Activated CD8-positive, alpha-beta T cell treated with anti-CD3 and anti-CD28 coated beads for 36 hours (primary cell): ENCODE measurements at regions of chr20 and their contacts with region 1.

Region 1: GRCh38 chr20:49888345-49888966 is 26.9 kb downstream of the SPATA2 start:
- DNase-seq: peak; percentile 76
- ATAC-seq: peak; percentile 68
- H3K4me3 Mint-ChIP-seq: no peak overlapping the region
- H3K27ac Mint-ChIP-seq: no peak overlapping the region
- H3K4me1 Mint-ChIP-seq: peaks cover 23% of the 10 kb centered on the region
- H3K27me3 Mint-ChIP-seq: no peaks in the 10 kb centered on the region
- CTCF ChIP-seq: peak; percentile 92

Region 2: DNA sequence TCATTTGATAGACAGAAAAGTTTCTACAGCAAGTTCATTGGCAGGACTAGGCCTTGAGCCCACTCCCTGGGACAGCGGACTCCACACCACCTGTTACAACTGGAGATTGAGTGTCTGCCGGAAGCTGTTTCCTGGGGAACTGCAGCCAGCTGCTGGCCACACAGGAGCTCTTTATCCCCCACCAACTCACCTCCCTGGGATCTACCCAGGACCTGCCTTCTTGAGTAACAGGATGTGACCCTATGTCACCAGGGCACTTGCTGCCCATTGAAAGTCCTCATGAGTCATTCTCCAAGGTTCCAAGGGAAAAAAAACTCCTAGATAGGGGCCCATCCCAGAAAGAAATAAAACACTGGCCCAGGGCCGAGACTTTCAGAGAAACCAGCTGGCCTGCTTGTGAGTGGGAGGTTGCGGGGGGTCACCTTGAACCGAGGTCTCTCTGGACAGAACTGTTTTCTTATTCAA is 113.2 kb before region 1 on chr20:
- CTCF ChIA-PET with region 1: no interaction called
- POLR2A ChIA-PET with region 1: no interaction called
- intact Hi-C with region 1: no loop called
- DNase-seq: no peak
- ATAC-seq: no peak
- H3K4me3 Mint-ChIP-seq: no peak overlapping the region
- H3K27ac Mint-ChIP-seq: no peak overlapping the region
- H3K4me1 Mint-ChIP-seq: peaks cover 20% of the 10 kb centered on the region
- H3K27me3 Mint-ChIP-seq: peaks cover 12% of the 10 kb centered on the region
- CTCF ChIP-seq: no peak

Region 3: GRCh38 chr20:49872056-49872455 is 16.4 kb before region 1 on chr20:
- CTCF ChIA-PET with region 1: interaction called, 16 read pairs
- POLR2A ChIA-PET with region 1: no interaction called
- intact Hi-C with region 1: no loop called
- DNase-seq: no peak
- ATAC-seq: no peak
- H3K4me3 Mint-ChIP-seq: no peak overlapping the region
- H3K27ac Mint-ChIP-seq: no peak overlapping the region
- H3K4me1 Mint-ChIP-seq: no peaks in the 10 kb centered on the region
- H3K27me3 Mint-ChIP-seq: no peaks in the 10 kb centered on the region
- CTCF ChIP-seq: no peak

Region 4: GRCh38 chr20:49901588-49901987 is 13.1 kb after region 1 on chr20:
- CTCF ChIA-PET with region 1: interaction called, 31 read pairs
- POLR2A ChIA-PET with region 1: interaction called, 3 read pairs
- intact Hi-C with region 1: no loop called
- DNase-seq: no peak
- ATAC-seq: no peak
- H3K4me3 Mint-ChIP-seq: no peak overlapping the region
- H3K27ac Mint-ChIP-seq: no peak overlapping the region
- H3K4me1 Mint-ChIP-seq: peaks cover 2% of the 10 kb centered on the region
- H3K27me3 Mint-ChIP-seq: no peaks in the 10 kb centered on the region
- CTCF ChIP-seq: no peak

Region 5: DNA sequence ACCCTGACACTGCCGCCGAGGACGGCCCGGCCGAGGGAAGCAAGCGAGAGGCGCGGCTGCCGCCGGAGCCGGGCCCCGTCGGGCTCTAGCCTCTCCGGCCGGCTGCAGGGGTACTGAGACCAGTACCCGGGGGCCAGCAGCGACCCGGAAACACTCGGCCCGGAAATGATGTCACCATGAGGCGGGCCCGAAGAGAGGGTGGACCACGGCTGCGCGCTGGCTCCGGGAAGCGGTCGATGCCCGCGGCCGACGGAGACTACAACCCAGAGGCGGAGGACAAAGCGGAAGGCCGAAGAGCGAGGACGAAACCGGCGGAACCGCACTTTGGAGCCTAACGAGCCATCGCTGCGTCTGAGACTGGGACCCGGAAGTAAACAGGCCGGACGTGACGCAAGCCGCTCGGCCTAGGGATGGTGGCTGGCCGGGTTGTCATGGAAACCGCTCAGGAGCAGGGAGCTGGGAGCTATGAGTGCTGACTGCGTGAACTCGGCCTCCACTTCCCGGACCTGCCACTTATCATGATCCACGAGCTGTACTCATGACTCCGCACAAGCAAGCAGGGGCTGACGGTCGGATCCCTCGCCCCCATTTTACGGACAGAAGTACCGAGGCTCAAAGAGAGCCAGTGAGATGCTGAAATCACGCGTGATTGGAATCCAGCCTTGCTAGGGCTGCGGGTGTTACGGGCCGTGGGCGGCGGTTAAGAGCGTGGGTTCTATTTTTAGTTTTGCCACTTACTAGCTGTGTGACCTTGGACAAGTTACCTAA is 27.1 kb after region 1 on chr20 and contains the start of gene SPATA2:
- CTCF ChIA-PET with region 1: interaction called, 40 read pairs
- POLR2A ChIA-PET with region 1: interaction called, 3 read pairs
- intact Hi-C with region 1: no loop called
- DNase-seq: peak; percentile 97
- ATAC-seq: peak; percentile 82
- H3K4me3 Mint-ChIP-seq: peak within 1 kb of the TSS; percentile 95
- H3K27ac Mint-ChIP-seq: peak within 1 kb of the TSS; percentile 100
- H3K4me1 Mint-ChIP-seq: peaks cover 30% of the 10 kb centered on the region
- H3K27me3 Mint-ChIP-seq: no peaks in the 10 kb centered on the region
- CTCF ChIP-seq: no peak
- total RNA-seq, gene SPATA2: 6.2 to 7.4 TPM